CD8-positive, alpha-beta T cell (primary cell): ENCODE measurements at regions of chr3 and their contacts with region 1.

Region 1: GRCh38 chr3:66253790-66254620 is 33.2 kb downstream of the SLC25A26 start:
- DNase-seq: peak in 2 of 9 experiments; percentile 51 to 60
- ATAC-seq: peak; percentile 38
- H3K4me3 ChIP-seq: no peak overlapping the region
- H3K4me3 Mint-ChIP-seq: no peak overlapping the region
- H3K27ac ChIP-seq: no peak overlapping the region
- H3K27ac Mint-ChIP-seq: no peak overlapping the region
- H3K4me1 ChIP-seq: no peaks in the 10 kb centered on the region
- H3K4me1 Mint-ChIP-seq: peaks cover 8% of the 10 kb centered on the region
- H3K27me3 ChIP-seq: no peaks in the 10 kb centered on the region
- H3K27me3 Mint-ChIP-seq: no peaks in the 10 kb centered on the region
- CTCF ChIP-seq: peak; percentile 84

Region 2: DNA sequence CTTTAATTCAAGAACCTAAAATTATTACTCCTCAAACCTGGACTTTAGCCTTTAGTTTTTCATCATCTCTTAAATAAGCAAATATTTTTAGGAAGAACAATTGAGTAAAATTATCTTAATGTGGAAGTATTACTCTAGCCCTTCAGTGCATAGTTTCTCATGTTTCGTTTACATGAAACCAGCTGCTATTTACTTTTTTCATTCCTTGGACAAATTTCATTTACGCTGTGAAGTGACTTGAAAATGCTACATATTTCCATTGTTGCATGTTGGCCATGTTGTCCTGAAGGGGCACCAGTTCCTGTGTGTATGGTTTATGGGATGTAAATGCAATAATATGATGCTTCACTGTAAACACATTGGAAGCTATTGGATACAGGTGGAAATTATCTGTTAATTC is 16.7 kb after region 1 on chr3:
- CTCF ChIA-PET with region 1: interaction called, 13 read pairs
- POLR2A ChIA-PET with region 1: no interaction called
- intact Hi-C with region 1: no loop called
- DNase-seq: no peak
- ATAC-seq: no peak
- H3K4me3 ChIP-seq: no peak overlapping the region
- H3K4me3 Mint-ChIP-seq: no peak overlapping the region
- H3K27ac ChIP-seq: no peak overlapping the region
- H3K27ac Mint-ChIP-seq: no peak overlapping the region
- H3K4me1 ChIP-seq: no peaks in the 10 kb centered on the region
- H3K4me1 Mint-ChIP-seq: peaks cover 3% of the 10 kb centered on the region
- H3K27me3 ChIP-seq: no peaks in the 10 kb centered on the region
- H3K27me3 Mint-ChIP-seq: no peaks in the 10 kb centered on the region
- CTCF ChIP-seq: no peak

Region 3: DNA sequence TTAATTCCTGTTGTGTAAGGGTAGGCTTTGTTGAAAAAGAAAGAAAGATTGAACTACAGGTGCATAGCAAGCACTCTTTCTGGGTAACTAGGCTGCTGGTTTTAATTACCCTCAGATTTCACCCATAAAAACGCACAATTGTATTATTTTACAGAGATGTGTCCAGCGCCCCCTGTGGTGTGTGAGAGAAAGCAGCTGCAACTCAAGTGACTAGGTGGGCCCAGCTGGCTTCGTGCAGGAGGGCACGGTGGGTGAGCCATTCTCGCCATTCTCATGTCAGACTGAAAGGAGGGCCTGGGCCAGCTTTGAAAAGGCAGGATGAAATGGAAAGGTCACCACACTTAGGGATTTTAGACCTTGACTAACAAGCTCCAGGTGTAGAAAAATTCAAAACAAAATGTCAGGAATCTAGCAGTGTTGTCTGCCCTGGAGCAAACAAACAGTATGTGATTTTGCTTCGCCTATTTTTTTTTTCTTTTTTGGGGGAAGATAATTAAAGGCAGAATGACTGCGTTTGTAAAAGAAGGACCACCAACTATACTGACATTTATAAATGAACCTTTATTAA is 124.3 kb after region 1 on chr3:
- CTCF ChIA-PET with region 1: interaction called, 10 read pairs
- POLR2A ChIA-PET with region 1: no interaction called
- intact Hi-C with region 1: no loop called
- DNase-seq: peak in 7 of 9 experiments; percentile 15 to 67 (median 46)
- ATAC-seq: peak; percentile 61
- H3K4me3 ChIP-seq: no peak overlapping the region
- H3K4me3 Mint-ChIP-seq: no peak overlapping the region
- H3K27ac ChIP-seq: peak overlapping the region in 1 of 2 experiments; percentile 37
- H3K27ac Mint-ChIP-seq: peak overlapping the region; percentile 86
- H3K4me1 ChIP-seq: no peaks in the 10 kb centered on the region
- H3K4me1 Mint-ChIP-seq: peaks cover 7% of the 10 kb centered on the region
- H3K27me3 ChIP-seq: no peaks in the 10 kb centered on the region
- H3K27me3 Mint-ChIP-seq: no peaks in the 10 kb centered on the region
- CTCF ChIP-seq: peak; percentile 56

Region 4: GRCh38 chr3:66816090-66816761 is 562.2 kb after region 1 on chr3:
- CTCF ChIA-PET with region 1: interaction called, 158 read pairs
- POLR2A ChIA-PET with region 1: no interaction called
- intact Hi-C with region 1: loop called (anchors 1 kb)
- DNase-seq: peak in 3 of 9 experiments; percentile 6 to 63 (median 53)
- ATAC-seq: peak; percentile 73
- H3K4me3 ChIP-seq: no peak overlapping the region
- H3K4me3 Mint-ChIP-seq: no peak overlapping the region
- H3K27ac ChIP-seq: no peak overlapping the region
- H3K27ac Mint-ChIP-seq: no peak overlapping the region
- H3K4me1 ChIP-seq: no peaks in the 10 kb centered on the region
- H3K4me1 Mint-ChIP-seq: no peaks in the 10 kb centered on the region
- H3K27me3 ChIP-seq: no peaks in the 10 kb centered on the region
- H3K27me3 Mint-ChIP-seq: peaks cover 7% of the 10 kb centered on the region
- CTCF ChIP-seq: peak; percentile 70

Region 5: DNA sequence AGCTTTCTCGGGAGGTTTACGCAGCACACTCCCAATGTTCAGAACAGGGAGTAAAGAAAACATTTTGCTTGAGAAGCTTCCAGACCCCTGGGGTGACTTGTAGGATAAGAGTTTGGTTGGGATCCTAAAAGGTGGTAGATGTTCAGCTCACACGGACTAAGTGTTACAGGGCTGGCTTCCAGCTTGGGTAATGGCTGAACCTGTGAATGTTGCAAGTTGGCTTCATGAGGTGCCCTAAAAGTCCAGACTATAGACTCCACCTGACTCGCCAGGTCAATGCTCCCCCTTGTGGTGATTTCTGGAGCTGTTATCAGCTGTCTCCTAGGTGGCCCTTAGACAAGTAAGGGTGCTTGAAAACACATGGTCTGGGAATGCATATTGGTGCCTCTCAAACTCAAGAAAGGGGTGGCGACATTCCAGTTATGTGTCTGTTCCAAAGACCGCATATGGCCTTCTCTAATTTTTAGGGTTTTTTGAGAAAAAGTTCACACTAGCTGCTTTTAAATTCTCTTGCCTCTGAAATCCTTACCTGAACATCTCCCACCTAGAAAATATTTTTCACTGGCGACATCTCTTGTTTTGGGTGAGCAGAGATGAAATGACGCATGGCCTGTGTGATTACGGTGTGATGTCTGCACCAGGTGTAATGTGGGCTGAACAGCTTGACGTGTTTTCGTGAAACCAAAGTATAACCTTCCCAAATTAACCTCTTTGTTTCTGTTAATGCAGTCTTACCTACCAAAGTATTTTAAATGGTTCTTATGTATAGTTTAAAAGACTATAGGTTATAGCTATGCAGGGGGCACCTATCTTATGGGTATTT is 568.4 kb after region 1 on chr3:
- CTCF ChIA-PET with region 1: interaction called, 158 read pairs
- POLR2A ChIA-PET with region 1: interaction called, 4 read pairs
- intact Hi-C with region 1: no loop called
- DNase-seq: peak; percentile 40 to 72 (median 67)
- ATAC-seq: peak; percentile 64
- H3K4me3 ChIP-seq: no peak overlapping the region
- H3K4me3 Mint-ChIP-seq: no peak overlapping the region
- H3K27ac ChIP-seq: no peak overlapping the region
- H3K27ac Mint-ChIP-seq: no peak overlapping the region
- H3K4me1 ChIP-seq: no peaks in the 10 kb centered on the region
- H3K4me1 Mint-ChIP-seq: no peaks in the 10 kb centered on the region
- H3K27me3 ChIP-seq: no peaks in the 10 kb centered on the region
- H3K27me3 Mint-ChIP-seq: peaks cover 8% of the 10 kb centered on the region
- CTCF ChIP-seq: peak; percentile 60